ENCODE measurements at regions of chr14 and their contacts with region 1.

Region 1: GRCh38 chr14:105281371-105282097 is 19.3 kb downstream of the BRF1 start:
- DNase-seq: peak; percentile 50 to 74 (median 64)
- ATAC-seq: peak; percentile 74
- H3K4me3 ChIP-seq: no peak overlapping the region
- H3K27ac ChIP-seq: peak overlapping the region; percentile 36 to 75 (median 67)
- H3K4me1 ChIP-seq: peaks cover 56% of the 10 kb centered on the region
- H3K27me3 ChIP-seq: no peaks in the 10 kb centered on the region
- CTCF ChIP-seq: peak; percentile 45 to 76 (median 70)
- POLR2A ChIP-seq: no peak

Region 2: DNA sequence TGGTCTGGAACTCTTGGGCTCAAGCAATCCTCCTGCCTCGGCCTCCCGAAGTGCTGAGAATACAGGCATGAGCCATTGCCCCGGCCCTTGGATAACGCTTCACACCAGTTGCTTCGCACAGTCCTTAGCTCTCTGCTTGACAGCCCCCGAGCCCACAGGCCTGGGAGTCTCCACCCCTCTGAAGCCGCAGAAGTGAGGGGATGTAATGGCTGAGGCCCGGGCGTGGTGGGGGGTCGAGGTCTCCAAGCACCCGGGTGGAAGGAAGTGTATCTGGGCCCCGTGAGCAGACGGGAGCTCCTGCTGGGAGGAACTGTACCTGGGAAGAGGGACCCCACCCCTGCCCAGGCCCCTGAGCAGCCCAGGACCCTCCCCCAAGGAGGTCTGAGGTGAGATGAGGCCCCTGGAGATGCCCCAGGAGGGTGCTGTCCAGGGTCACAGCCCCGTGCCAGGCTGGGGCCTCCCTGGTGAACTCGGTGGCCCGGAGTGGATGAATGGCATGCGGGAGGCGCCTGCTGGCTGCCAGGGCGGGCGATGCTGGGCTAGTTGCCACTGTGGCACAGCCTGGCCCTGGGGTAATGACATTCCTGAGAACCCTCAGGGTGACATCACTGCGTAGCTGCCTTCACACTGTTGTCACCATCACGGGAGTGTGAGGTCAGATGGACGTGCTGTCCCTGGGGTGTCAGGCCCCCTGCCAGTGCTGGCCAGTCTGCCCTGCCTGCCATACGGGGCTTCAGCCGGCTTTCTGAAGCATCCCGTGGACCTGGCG is 1094.2 kb before region 1 on chr14:
- intact Hi-C with region 1: no loop called
- DNase-seq: peak in 3 of 4 donors; percentile 26 to 50 (median 45)
- ATAC-seq: peak; percentile 57
- H3K4me3 ChIP-seq: no peak overlapping the region
- H3K27ac ChIP-seq: peak overlapping the region in 2 of 4 donors; percentile 34 to 39
- H3K4me1 ChIP-seq: no peaks in the 10 kb centered on the region
- H3K27me3 ChIP-seq: no peaks in the 10 kb centered on the region
- CTCF ChIP-seq: no peak
- POLR2A ChIP-seq: no peak

Region 3: GRCh38 chr14:104777486-104778249 is 503.9 kb before region 1 on chr14:
- intact Hi-C with region 1: no loop called
- DNase-seq: no peak
- ATAC-seq: no peak
- H3K4me3 ChIP-seq: no peak overlapping the region
- H3K27ac ChIP-seq: peak overlapping the region in 2 of 4 donors; percentile 16 to 81
- H3K4me1 ChIP-seq: peaks cover 52% of the 10 kb centered on the region
- H3K27me3 ChIP-seq: no peaks in the 10 kb centered on the region
- CTCF ChIP-seq: no peak
- POLR2A ChIP-seq: no peak

Region 4: GRCh38 chr14:105203057-105203531 is 78.4 kb before region 1 on chr14:
- intact Hi-C with region 1: loop called (anchors 5 kb)
- DNase-seq: peak; percentile 77 to 87 (median 84)
- ATAC-seq: peak; percentile 57
- H3K4me3 ChIP-seq: no peak overlapping the region
- H3K27ac ChIP-seq: no peak overlapping the region
- H3K4me1 ChIP-seq: peaks cover 49% of the 10 kb centered on the region
- H3K27me3 ChIP-seq: peaks cover 0 to 25% of the 10 kb centered on the region in 2 donors
- CTCF ChIP-seq: peak; percentile 84 to 96 (median 89)
- POLR2A ChIP-seq: no peak